A673 (cell line): ENCODE measurements at regions of chr9 and their contacts with region 1.

Region 1: GRCh38 chr9:78775696-78776295 is 478.9 kb downstream of the PSAT1 start:
- DNase-seq: peak; percentile 23
- H3K4me3 ChIP-seq: no peak overlapping the region
- H3K27ac ChIP-seq: no peak overlapping the region
- H3K4me1 ChIP-seq: peaks cover 37% of the 10 kb centered on the region
- H3K27me3 ChIP-seq: no peaks in the 10 kb centered on the region
- CTCF ChIP-seq: no peak

Region 2: GRCh38 chr9:78620764-78621163 is 155.0 kb before region 1 on chr9:
- CTCF ChIA-PET with region 1: no interaction called
- POLR2A ChIA-PET with region 1: no interaction called
- intact Hi-C with region 1: no loop called
- DNase-seq: no peak
- H3K4me3 ChIP-seq: no peak overlapping the region
- H3K27ac ChIP-seq: no peak overlapping the region
- H3K4me1 ChIP-seq: no peaks in the 10 kb centered on the region
- H3K27me3 ChIP-seq: no peaks in the 10 kb centered on the region
- CTCF ChIP-seq: no peak

Region 3: GRCh38 chr9:78866207-78867132 is 90.7 kb after region 1 on chr9:
- CTCF ChIA-PET with region 1: no interaction called
- POLR2A ChIA-PET with region 1: no interaction called
- intact Hi-C with region 1: loop called (anchors 5 kb)
- DNase-seq: peak; percentile 33
- H3K4me3 ChIP-seq: no peak overlapping the region
- H3K27ac ChIP-seq: no peak overlapping the region
- H3K4me1 ChIP-seq: peaks cover 13% of the 10 kb centered on the region
- H3K27me3 ChIP-seq: no peaks in the 10 kb centered on the region
- CTCF ChIP-seq: no peak